Upper lobe of right lung (tissue), 1 donor: ENCODE measurements at regions of chr1 and their contacts with region 1.

Region 1: DNA sequence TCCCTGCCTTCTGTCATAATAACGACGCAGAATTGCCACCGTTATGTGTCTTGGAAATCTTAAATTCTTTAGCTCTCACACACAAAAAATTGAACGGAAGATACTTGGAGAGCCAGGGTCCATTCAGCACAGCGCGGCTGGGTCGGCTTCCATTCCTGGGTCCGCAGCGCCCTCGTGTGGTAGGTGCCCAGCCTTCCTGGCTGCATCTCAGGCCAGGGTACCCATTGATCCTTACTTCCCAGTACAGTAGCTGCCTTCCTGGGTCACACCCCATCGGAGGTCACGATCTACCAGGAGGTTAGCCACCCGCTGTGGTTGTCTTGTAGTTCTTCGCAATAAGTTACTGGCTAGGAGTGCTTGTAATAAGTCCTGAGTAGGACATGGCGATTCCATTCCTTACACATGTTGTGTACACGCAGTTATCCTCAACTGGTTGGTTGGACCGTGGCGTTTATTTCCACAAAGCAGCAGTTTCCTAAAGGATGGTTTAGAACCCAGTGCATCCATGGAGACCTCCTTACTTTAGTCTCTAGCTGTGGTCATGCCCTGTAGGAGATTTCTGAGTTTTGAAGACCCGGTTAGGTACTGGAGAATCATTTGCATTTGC is 9.9 kb upstream of the MTARC1 start:
- DNase-seq: peak; percentile 92
- ATAC-seq: peak; percentile 99
- H3K4me3 ChIP-seq: no peak overlapping the region
- H3K27ac ChIP-seq: no peak overlapping the region
- H3K4me1 ChIP-seq: no peaks in the 10 kb centered on the region
- H3K27me3 ChIP-seq: no peaks in the 10 kb centered on the region
- CTCF ChIP-seq: peak; percentile 94

Region 2: DNA sequence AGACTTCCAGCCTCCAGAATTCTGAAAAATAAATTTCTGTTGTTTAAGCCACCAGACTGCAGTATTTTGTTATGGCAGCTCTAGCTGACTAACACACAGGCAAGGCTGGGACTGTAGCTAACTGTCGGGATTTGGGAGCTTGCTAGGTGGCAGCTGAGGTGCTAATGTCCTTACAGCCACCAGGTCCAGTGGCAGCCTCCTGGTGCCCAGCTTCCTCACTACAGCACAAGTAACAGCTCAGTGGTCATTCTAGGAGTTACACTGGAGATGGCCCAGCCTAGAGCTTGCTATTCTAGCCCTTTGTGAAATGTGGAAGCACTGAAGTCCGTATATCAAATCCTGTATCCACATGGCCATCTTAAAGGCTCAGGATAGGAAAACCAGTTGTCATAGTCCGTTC is 90.9 kb before region 1 on chr1:
- intact Hi-C with region 1: loop called (anchors 5 kb)
- DNase-seq: no peak
- ATAC-seq: no peak
- H3K4me3 ChIP-seq: no peak overlapping the region
- H3K27ac ChIP-seq: no peak overlapping the region
- H3K4me1 ChIP-seq: peaks cover 10% of the 10 kb centered on the region
- H3K27me3 ChIP-seq: no peaks in the 10 kb centered on the region
- CTCF ChIP-seq: no peak

Region 3: DNA sequence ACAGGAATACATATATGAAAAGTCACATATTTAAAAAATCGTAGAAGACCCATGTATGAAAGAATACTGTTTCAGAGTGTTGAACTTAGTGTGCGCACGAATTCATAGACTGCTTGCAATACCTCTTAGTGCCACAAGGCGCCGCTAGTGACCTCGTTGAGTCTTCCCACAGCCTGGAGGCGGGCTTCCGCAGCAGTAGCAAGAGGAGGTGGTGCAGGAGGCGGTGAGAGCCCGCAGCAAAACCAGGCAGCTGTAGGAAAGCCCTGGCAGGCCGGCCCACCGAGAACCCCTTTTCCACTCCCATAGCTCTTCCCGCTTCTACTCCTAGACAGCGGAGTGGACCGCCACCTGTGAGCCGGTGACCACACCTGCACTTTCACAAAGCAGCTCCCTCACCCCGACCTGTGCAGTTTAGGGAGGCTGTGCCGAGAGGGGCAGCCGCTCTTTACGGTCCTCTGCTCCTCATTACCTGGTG is 33.4 kb after region 1 on chr1:
- intact Hi-C with region 1: no loop called
- DNase-seq: peak; percentile 87
- ATAC-seq: peak; percentile 97
- H3K4me3 ChIP-seq: peak overlapping the region; percentile 23
- H3K27ac ChIP-seq: no peak overlapping the region
- H3K4me1 ChIP-seq: peaks cover 6% of the 10 kb centered on the region
- H3K27me3 ChIP-seq: no peaks in the 10 kb centered on the region
- CTCF ChIP-seq: peak; percentile 96